ENCODE measurements at regions of chr7 and their contacts with region 1.

Region 1: GRCh38 chr7:151459726-151460473 is 20.0 kb upstream of the CRYGN start:
- DNase-seq: peak; percentile 87
- H3K4me3 ChIP-seq: peak overlapping the region in 1 of 2 donors; percentile 2
- H3K27ac ChIP-seq: peak overlapping the region; percentile 76 to 81
- H3K4me1 ChIP-seq: peaks cover 5% of the 10 kb centered on the region
- H3K27me3 ChIP-seq: no peaks in the 10 kb centered on the region
- CTCF ChIP-seq: peak in 3 of 4 experiments; percentile 29 to 48 (median 45)
- POLR2A ChIP-seq: no peak

Region 2: GRCh38 chr7:151408839-151409666 is 50.8 kb before region 1 on chr7:
- intact Hi-C with region 1: no loop called
- DNase-seq: no peak
- H3K4me3 ChIP-seq: peak overlapping the region; percentile 29 to 40
- H3K27ac ChIP-seq: peak overlapping the region in 1 of 2 donors; percentile 36
- H3K4me1 ChIP-seq: peaks cover 8% of the 10 kb centered on the region
- H3K27me3 ChIP-seq: peaks cover 13% of the 10 kb centered on the region
- CTCF ChIP-seq: no peak
- POLR2A ChIP-seq: no peak

Region 3: DNA sequence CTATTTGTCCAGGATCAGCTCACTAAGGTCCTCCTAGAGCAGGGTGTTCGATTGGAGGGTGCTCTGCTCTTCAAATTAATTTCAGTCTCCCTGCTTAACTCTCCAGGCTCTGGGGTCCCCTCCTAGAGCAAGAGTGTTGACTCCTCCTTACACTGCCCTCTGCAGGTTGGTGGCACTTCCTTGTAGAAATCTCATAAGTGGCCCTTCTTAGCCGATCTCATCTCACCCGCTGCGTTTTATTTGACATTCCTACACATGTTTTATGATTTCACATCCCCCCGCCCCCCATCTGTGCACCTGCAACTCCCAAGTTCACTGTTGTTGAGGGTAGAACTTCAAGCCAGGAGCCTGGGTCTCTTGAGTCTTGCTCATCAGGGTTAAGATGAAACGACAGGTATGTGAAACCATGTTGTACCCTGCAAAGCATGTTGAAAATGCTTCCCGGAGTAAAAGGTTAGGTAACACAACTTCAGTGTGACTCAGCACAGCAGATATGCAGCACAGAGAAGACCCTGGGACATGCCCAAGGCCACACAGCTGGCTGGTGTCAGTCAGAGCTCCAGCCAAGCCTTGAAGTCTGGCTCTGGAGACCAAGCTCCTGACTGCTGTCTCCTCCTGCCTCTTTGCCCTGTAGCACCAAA is 245.9 kb after region 1 on chr7:
- intact Hi-C with region 1: loop called (anchors 5 kb)
- DNase-seq: no peak
- H3K4me3 ChIP-seq: no peak overlapping the region
- H3K27ac ChIP-seq: no peak overlapping the region
- H3K4me1 ChIP-seq: no peaks in the 10 kb centered on the region
- H3K27me3 ChIP-seq: no peaks in the 10 kb centered on the region
- CTCF ChIP-seq: peak in 3 of 4 experiments; percentile 38 to 64 (median 46)
- POLR2A ChIP-seq: no peak